Keratinocyte (primary cell): ENCODE measurements at regions of chr6 and their contacts with region 1.

Region 1: DNA sequence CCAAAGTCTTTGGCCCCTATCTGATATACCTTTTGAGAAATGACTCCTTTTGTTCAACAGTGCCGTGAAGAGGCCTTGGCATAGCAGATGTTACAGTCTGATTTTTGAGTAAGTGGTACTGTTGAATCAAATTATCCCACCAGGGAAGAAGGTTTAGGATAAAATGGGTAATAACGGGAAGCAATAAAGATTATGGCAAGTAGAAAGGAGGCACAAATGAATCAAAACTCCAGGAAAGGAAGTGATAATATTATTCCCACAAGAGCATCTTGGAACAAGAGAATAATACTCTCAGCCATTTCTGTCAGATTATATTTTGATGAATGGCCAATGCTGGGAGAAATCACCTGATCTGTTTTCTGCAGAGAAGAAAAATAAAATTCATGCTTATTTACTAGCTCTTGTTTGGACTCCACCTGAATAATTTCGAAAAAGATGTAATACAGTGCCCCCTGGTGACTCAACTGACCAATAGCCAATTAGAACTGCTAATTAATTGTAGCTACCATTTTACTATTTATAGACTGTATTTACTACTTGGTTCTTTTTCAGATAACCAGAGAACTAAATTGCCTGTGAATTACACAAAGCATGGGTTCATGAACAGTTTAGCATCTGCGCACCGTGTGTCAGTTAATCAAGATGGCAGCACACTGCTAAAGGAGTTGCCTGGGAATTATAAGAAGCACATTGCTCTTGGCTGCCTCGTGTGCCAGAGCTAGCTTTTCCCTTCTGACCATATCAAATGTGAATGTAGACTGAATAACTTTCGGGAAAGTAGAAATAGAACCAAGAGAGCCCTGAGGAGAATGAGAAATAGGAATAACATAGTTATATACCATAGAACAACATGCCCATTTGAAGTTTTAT is 78.5 kb upstream of the TRDN start:
- DNase-seq: no peak
- H3K4me3 ChIP-seq: no peak overlapping the region
- H3K27ac ChIP-seq: no peak overlapping the region
- H3K4me1 ChIP-seq: no peaks in the 10 kb centered on the region
- H3K27me3 ChIP-seq: no peaks in the 10 kb centered on the region
- CTCF ChIP-seq: peak in 1 of 3 experiments; percentile 50

Region 2: GRCh38 chr6:123415844-123416468 is 299.3 kb before region 1 on chr6:
- dilution Hi-C with region 1: loop called (anchors 25 kb)
- DNase-seq: no peak
- H3K4me3 ChIP-seq: no peak overlapping the region
- H3K27ac ChIP-seq: no peak overlapping the region
- H3K4me1 ChIP-seq: no peaks in the 10 kb centered on the region
- H3K27me3 ChIP-seq: no peaks in the 10 kb centered on the region
- CTCF ChIP-seq: peak; percentile 35 to 57 (median 50)